OCI-LY7 (cell line): ENCODE measurements at regions of chr6 and their contacts with region 1.

Region 1: GRCh38 chr6:88982720-88983119 is 19.3 kb upstream of the RNGTT start:
- DNase-seq: peak; percentile 72
- H3K4me3 ChIP-seq: no peak overlapping the region
- H3K27ac ChIP-seq: no peak overlapping the region
- H3K4me1 ChIP-seq: no peaks in the 10 kb centered on the region
- CTCF ChIP-seq: peak; percentile 98

Region 2: GRCh38 chr6:89122625-89123024 is 139.9 kb after region 1 on chr6:
- CTCF ChIA-PET with region 1: no interaction called
- POLR2A ChIA-PET with region 1: interaction called, 3 read pairs
- intact Hi-C with region 1: loop called (anchors 2 kb)
- DNase-seq: peak; percentile 63
- H3K4me3 ChIP-seq: no peak overlapping the region
- H3K27ac ChIP-seq: no peak overlapping the region
- H3K4me1 ChIP-seq: no peaks in the 10 kb centered on the region
- CTCF ChIP-seq: peak; percentile 85